Ascending aorta (tissue), 2 donors: ENCODE measurements at regions of chr20 and their contacts with region 1.

Region 1: DNA sequence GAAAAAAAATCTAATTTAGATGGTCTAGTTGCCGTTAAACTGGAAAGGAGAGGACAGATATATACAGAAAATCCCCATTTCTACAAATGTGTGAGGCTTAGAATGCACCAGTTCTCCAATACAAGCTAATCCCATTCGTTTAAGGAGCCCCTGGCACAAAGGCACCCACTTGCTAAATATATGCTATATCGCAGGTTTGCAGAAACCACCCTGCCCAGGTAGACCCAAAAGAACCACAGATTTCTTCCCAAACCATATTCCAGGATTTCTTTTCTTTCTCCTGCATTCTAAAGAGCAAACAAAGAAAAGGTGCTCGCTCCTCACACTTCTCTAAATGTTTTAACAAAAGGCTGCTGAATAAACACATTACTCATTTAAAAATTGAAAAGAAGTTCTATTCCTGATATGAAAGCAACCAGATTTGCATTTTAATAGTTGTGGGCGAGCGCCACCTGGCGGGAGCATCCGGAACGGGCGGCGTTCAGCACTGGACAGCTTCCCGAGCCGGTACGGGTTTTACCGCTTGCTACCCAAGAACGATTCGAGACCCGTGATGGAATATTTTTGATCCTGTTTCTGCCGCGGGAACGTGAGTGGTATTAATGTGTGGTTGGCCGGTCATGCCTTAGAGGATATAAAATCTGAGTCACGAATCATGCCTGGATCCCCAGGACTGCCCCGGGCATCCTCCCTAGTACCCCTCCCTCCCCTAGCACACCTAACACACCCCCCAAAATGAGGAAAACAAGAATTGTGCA is 2.1 kb downstream of the PTPRT start:
- DNase-seq: peak in 1 of 2 donors; percentile 82
- H3K4me3 ChIP-seq: peak overlapping the region in 1 of 2 donors; percentile 57
- H3K27ac ChIP-seq: no peak overlapping the region
- H3K4me1 ChIP-seq: peaks cover 11 to 12% of the 10 kb centered on the region in 2 donors
- H3K27me3 ChIP-seq: peaks cover 7% of the 10 kb centered on the region
- CTCF ChIP-seq: peak; percentile 63 to 92 (median 78)

Region 2: GRCh38 chr20:41738604-41739206 is 1449.0 kb before region 1 on chr20:
- intact Hi-C with region 1: loop called (anchors 10 kb)
- DNase-seq: no peak
- H3K4me3 ChIP-seq: no peak overlapping the region
- H3K27ac ChIP-seq: no peak overlapping the region
- H3K4me1 ChIP-seq: no peaks in the 10 kb centered on the region
- H3K27me3 ChIP-seq: no peaks in the 10 kb centered on the region
- CTCF ChIP-seq: peak; percentile 42 to 68 (median 48)

Region 3: DNA sequence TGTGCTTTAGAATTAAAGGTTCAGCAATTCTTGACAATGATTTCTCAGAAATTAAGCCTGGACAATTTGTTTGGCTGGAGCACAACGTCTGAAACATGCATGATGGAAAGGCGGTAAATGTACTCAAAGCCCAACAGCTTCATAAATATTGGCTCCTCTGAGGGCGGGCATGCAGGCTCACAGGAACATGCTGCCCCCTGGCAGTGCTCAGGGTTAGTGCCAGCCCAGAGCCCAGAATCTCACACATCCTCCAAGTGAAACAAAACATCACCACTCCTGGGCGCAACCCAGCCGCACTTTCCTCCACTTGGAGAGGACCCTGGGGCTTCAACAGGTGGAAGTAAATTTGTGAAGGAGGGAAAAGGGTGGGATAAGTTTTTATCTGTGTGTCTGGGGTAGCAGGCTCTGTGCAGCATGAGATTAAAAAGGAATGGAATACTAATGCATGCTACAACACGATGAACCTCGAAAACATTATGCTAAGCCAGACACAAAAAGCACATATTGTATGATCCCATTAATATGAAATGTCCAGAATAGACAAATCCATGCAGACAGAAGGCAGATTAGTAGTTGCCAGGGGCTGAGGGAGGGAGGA is 56.1 kb after region 1 on chr20:
- intact Hi-C with region 1: loop called (anchors 1 kb)
- DNase-seq: no peak
- H3K4me3 ChIP-seq: no peak overlapping the region
- H3K27ac ChIP-seq: no peak overlapping the region
- H3K4me1 ChIP-seq: no peaks in the 10 kb centered on the region
- H3K27me3 ChIP-seq: no peaks in the 10 kb centered on the region
- CTCF ChIP-seq: peak; percentile 14 to 70 (median 47)